Left lung (tissue), 14 donors: ENCODE measurements at regions of chr17 and their contacts with region 1.

Region 1: GRCh38 chr17:18877104-18877503 is 19.2 kb downstream of the PRPSAP2 start:
- DNase-seq: no peak
- ATAC-seq: no peak
- H3K4me3 ChIP-seq: no peak overlapping the region
- H3K27ac ChIP-seq: no peak overlapping the region
- H3K4me1 ChIP-seq: no peaks in the 10 kb centered on the region
- H3K27me3 ChIP-seq: no peaks in the 10 kb centered on the region
- CTCF ChIP-seq: no peak

Region 2: GRCh38 chr17:18933102-18934058 is 56.3 kb after region 1 on chr17:
- intact Hi-C with region 1: loop called in 1 of 2 experiments (anchors 10 kb)
- DNase-seq: no peak
- ATAC-seq: no peak
- H3K4me3 ChIP-seq: no peak overlapping the region
- H3K27ac ChIP-seq: no peak overlapping the region
- H3K4me1 ChIP-seq: no peaks in the 10 kb centered on the region
- H3K27me3 ChIP-seq: no peaks in the 10 kb centered on the region
- CTCF ChIP-seq: no peak

Region 3: DNA sequence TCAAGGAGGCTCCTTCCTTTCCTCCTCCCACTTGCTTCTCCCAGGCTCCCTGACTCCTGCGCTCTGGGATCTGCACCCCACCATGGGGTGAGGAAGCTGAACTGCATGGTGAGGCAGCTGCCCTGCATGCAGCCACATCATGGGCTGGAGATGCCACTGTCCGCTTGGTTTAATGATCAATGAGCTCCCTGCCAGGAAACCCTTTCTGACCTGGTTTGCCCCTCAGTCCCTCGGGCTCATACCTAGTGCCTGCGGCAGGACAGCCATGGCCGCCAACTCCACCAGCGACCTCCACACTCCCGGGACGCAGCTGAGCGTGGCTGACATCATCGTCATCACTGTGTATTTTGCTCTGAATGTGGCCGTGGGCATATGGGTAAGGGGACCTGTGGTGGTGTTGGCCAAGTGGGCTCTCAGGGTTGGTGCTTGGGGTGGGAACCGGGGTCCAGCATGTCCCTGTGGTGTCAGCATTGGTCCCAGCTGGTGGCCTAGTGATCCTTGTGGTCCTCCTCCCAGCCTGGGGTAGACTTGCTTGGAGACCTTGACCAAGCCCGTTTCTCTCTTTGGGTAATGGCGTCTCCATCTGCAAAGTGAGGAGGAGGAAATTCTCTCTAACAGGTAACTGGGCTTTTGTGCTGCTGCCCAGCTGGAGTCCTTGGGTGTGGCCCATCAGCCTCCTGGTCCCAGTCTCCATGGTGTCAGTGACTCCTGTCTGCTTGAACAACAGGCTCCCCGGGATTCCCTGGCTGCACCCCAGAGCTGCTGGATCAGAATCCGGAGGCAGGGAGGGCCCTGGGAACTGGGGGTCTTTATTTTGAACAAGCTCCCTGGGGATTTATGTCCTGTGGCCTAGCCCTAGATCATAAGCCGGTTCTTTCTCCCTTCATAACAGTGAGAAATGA is 75.1 kb after region 1 on chr17 and contains the start of gene SLC5A10:
- intact Hi-C with region 1: no loop called
- DNase-seq: no peak
- ATAC-seq: no peak
- H3K4me3 ChIP-seq: no peak within 1 kb of the TSS
- H3K27ac ChIP-seq: no peak within 1 kb of the TSS
- H3K4me1 ChIP-seq: no peaks in the 10 kb centered on the region
- H3K27me3 ChIP-seq: no peaks in the 10 kb centered on the region
- CTCF ChIP-seq: no peak
- polyA plus RNA-seq, gene SLC5A10: 0.60 to 1.0 (median 0.77) TPM

Region 4: GRCh38 chr17:19024101-19025078 is 147.3 kb after region 1 on chr17:
- intact Hi-C with region 1: no loop called
- DNase-seq: peak in 1 of 4 donors; percentile 37
- ATAC-seq: no peak
- H3K4me3 ChIP-seq: no peak overlapping the region
- H3K27ac ChIP-seq: no peak overlapping the region
- H3K4me1 ChIP-seq: no peaks in the 10 kb centered on the region
- H3K27me3 ChIP-seq: no peaks in the 10 kb centered on the region
- CTCF ChIP-seq: no peak